Ascending aorta (tissue), 2 donors: ENCODE measurements at regions of chr4 and their contacts with region 1.

Region 1: DNA sequence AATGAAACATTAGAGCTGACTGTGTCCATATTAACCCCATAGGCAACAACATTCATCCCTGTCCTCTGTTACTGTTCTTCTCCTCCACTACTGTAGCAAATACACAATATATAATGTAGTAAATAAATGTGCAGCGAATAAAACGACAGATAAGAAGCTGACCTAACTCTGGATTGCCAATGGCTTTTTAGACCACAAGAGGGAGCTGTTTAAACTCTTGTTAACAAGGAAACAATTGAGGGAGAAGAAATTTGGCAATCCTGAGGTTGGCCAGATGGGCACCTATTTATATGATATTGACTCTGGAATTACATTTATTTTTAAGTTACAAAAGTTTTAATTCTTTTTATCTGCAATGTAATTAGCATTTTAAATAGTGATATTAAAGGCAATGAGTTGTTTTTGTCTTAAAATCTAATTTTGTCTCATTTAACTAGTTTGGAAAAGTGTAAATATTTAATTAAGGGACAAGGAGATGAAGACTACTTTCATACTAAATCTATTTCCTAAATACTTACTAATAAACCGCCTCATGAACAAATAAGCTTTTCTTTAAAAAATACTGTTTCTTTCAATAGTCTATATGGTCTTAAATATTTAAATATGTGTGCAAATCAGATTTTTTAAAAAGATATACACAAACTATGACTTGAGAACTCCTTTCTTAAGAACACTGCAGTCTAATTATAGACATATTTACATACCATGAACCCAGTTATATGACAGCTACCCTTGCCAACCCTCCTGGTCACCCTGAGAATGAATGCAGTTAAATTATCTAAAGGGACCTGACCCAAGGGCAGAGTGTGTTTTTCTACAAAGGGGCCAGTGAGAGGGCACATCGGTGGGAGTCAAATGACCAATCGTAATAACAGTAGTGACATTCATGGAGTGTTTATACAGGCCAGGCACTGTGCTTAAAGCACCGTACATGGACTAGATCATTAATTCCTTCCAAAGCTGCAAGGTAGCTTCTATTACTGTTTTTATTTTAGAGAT is 52.9 kb upstream of the HPF1 start:
- DNase-seq: no peak
- H3K4me3 ChIP-seq: no peak overlapping the region
- H3K27ac ChIP-seq: no peak overlapping the region
- H3K4me1 ChIP-seq: no peaks in the 10 kb centered on the region
- H3K27me3 ChIP-seq: no peaks in the 10 kb centered on the region
- CTCF ChIP-seq: peak; percentile 43 to 79 (median 73)

Region 2: DNA sequence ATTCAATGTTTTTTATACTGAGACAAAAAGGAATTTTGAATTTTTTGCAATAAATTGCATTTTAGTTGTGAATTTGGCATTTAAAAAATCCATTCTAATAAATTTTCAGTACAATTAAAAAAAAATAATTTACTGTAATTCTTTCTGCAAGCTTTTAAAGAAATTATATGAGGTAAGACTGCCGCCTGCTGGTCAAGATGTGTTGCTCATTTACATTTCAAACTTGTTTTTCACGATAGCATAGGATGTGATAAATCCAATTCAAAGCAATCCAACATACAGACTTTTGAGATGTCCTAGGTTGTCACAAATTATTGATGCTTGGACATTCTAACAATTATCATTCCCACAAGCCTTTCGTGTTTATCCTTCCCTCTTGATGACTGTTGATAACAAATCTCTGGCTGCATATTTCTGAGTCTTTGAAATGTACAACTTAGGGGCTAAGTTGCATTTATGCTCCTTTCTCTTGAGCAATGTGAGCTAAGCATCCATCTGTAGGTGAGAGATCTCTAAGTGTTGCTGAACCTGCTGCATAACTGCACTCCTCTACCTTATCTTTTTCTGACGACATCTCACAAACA is 237.2 kb after region 1 on chr4:
- intact Hi-C with region 1: loop called (anchors 2 kb)
- DNase-seq: peak in 1 of 2 donors; percentile 68
- H3K4me3 ChIP-seq: no peak overlapping the region
- H3K27ac ChIP-seq: no peak overlapping the region
- H3K4me1 ChIP-seq: no peaks in the 10 kb centered on the region
- H3K27me3 ChIP-seq: no peaks in the 10 kb centered on the region
- CTCF ChIP-seq: peak; percentile 65 to 74 (median 66)

Region 3: DNA sequence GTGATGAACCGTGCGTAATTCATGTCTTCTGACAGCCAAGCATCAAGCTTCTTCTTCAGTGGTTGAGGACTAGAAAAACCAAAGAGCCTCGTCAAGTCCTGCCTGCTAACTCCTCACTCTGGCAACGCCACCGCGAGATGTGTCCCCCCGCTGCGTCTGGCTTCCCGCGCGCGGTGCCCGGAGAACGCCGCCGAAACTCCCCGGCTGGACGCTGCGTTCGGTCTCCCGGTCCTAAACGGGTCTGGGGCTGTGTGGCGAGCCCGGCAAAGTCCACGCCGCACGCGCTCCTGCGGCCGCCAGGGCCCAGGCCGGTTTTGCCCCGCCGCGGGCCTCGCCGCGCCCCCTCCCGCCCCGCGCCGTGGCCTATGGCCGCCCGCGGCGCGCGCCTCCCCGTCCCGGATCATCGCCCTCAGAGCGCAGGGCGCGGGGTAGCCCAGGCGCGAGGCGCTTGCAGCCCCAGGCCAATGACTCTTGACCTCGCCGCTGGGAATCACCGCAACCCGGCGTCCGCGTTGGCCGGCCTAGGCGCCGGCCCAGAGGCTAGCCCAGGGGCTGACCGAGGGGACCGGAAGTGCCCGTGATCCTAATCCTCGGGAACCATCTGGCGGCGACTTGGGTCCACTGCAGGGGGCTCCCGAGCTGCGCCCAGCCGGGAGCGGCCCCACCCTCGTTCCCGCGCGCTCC is 279.2 kb after region 1 on chr4 and contains the start of gene AADAT:
- intact Hi-C with region 1: loop called (anchors 2 kb)
- DNase-seq: peak in 1 of 2 donors; percentile 83
- H3K4me3 ChIP-seq: peak within 1 kb of the TSS; percentile 69 to 71
- H3K27ac ChIP-seq: peak within 1 kb of the TSS; percentile 51 to 79
- H3K4me1 ChIP-seq: peaks cover 0 to 4% of the 10 kb centered on the region in 2 donors
- H3K27me3 ChIP-seq: no peaks in the 10 kb centered on the region
- CTCF ChIP-seq: peak; percentile 57 to 76 (median 72)
- total RNA-seq, gene AADAT: 19.7 TPM

Region 4: GRCh38 chr4:170990989-170991589 is 1180.5 kb after region 1 on chr4:
- intact Hi-C with region 1: no loop called
- DNase-seq: no peak
- H3K4me3 ChIP-seq: no peak overlapping the region
- H3K27ac ChIP-seq: no peak overlapping the region
- H3K4me1 ChIP-seq: no peaks in the 10 kb centered on the region
- H3K27me3 ChIP-seq: no peaks in the 10 kb centered on the region
- CTCF ChIP-seq: peak; percentile 7 to 45 (median 23)